ENCODE measurements at regions of chr11 and their contacts with region 1.

Region 1: DNA sequence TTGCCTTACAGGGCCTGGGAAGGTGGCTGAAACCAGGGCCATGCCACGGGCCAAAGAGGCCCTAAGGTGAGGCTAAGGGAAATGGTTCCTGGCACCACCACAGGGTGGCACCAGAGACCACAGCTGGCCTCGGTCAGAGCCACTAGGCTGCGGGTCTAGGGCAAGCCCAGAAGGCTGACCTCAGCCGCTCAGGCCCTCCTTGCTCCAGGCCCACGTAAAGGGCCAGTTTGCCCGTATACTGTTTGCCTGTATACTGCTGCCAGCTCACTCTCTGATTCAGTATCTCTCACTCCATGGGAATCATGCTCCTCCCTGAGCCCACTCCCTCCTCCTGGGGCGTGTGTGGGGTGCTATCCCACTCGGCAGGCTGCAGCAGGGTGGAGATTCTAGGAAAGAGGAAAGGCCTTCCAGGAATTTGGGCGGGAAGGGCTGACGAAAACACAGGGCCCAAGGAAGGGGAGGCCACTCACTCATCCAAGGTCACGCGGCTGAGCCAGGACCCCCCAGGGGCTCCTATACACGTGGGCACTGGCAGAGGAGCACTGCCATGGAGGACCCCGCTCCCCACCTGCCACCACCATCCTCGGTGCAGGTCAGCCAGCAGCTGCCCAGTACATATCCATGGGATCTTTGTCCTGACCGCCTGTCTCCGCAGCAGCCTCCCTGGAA is 62.4 kb downstream of the NECTIN1 start:
- DNase-seq: peak; percentile 72 to 91 (median 83)
- H3K4me3 ChIP-seq: no peak overlapping the region
- H3K27ac ChIP-seq: peak overlapping the region in 1 of 5 donors; percentile 16
- H3K4me1 ChIP-seq: peaks cover 0 to 9% of the 10 kb centered on the region in 2 donors
- H3K27me3 ChIP-seq: no peaks in the 10 kb centered on the region
- CTCF ChIP-seq: peak; percentile 92 to 99 (median 97)
- POLR2A ChIP-seq: no peak

Region 2: GRCh38 chr11:119481021-119481666 is 185.5 kb before region 1 on chr11:
- intact Hi-C with region 1: loop called (anchors 10 kb)
- DNase-seq: peak; percentile 78 to 92 (median 89)
- H3K4me3 ChIP-seq: no peak overlapping the region
- H3K27ac ChIP-seq: no peak overlapping the region
- H3K4me1 ChIP-seq: peaks cover 0 to 8% of the 10 kb centered on the region in 2 donors
- H3K27me3 ChIP-seq: no peaks in the 10 kb centered on the region
- CTCF ChIP-seq: peak; percentile 94 to 98 (median 98)
- POLR2A ChIP-seq: no peak

Region 3: GRCh38 chr11:119728651-119729580 is 62.3 kb after region 1 on chr11 and contains the start of gene NECTIN1:
- intact Hi-C with region 1: loop called in 1 of 2 experiments (anchors 5 kb)
- DNase-seq: peak; percentile 84 to 91 (median 88)
- H3K4me3 ChIP-seq: peak within 1 kb of the TSS in 3 of 4 donors; percentile 18 to 85 (median 62)
- H3K27ac ChIP-seq: peak within 1 kb of the TSS in 4 of 5 donors; percentile 54 to 98 (median 76)
- H3K4me1 ChIP-seq: peaks cover 16 to 24% of the 10 kb centered on the region in 2 donors
- H3K27me3 ChIP-seq: no peaks in the 10 kb centered on the region
- CTCF ChIP-seq: peak; percentile 69 to 97 (median 85)
- POLR2A ChIP-seq: peak; percentile 75 to 93
- total RNA-seq, gene NECTIN1: 1.6 to 19.6 (median 5.3) TPM

Region 4: GRCh38 chr11:119739021-119739703 is 72.6 kb after region 1 on chr11:
- intact Hi-C with region 1: loop called (anchors 5 kb)
- DNase-seq: no peak
- H3K4me3 ChIP-seq: no peak overlapping the region
- H3K27ac ChIP-seq: no peak overlapping the region
- H3K4me1 ChIP-seq: no peaks in the 10 kb centered on the region
- H3K27me3 ChIP-seq: peaks cover 25% of the 10 kb centered on the region
- CTCF ChIP-seq: no peak
- POLR2A ChIP-seq: no peak

Region 5: GRCh38 chr11:119752345-119752871 is 85.8 kb after region 1 on chr11:
- intact Hi-C with region 1: no loop called
- DNase-seq: no peak
- H3K4me3 ChIP-seq: no peak overlapping the region
- H3K27ac ChIP-seq: peak overlapping the region in 1 of 5 donors; percentile 27
- H3K4me1 ChIP-seq: no peaks in the 10 kb centered on the region
- H3K27me3 ChIP-seq: no peaks in the 10 kb centered on the region
- CTCF ChIP-seq: no peak
- POLR2A ChIP-seq: no peak

Region 6: GRCh38 chr11:120013325-120014270 is 347.0 kb after region 1 on chr11:
- intact Hi-C with region 1: loop called in 1 of 2 experiments (anchors 10 kb)
- DNase-seq: peak in 6 of 7 donors; percentile 22 to 65 (median 35)
- H3K4me3 ChIP-seq: no peak overlapping the region
- H3K27ac ChIP-seq: no peak overlapping the region
- H3K4me1 ChIP-seq: no peaks in the 10 kb centered on the region
- H3K27me3 ChIP-seq: peaks cover 14% of the 10 kb centered on the region
- CTCF ChIP-seq: peak; percentile 29 to 65 (median 50)
- POLR2A ChIP-seq: no peak

Region 7: GRCh38 chr11:120108154-120108865 is 441.7 kb after region 1 on chr11:
- intact Hi-C with region 1: loop called (anchors 2 to 10 kb)
- DNase-seq: peak; percentile 46 to 85 (median 77)
- H3K4me3 ChIP-seq: no peak overlapping the region
- H3K27ac ChIP-seq: no peak overlapping the region
- H3K4me1 ChIP-seq: no peaks in the 10 kb centered on the region
- H3K27me3 ChIP-seq: peaks cover 7% of the 10 kb centered on the region
- CTCF ChIP-seq: peak; percentile 96 to 99 (median 98)
- POLR2A ChIP-seq: no peak

Region 8: GRCh38 chr11:120172054-120172911 is 505.7 kb after region 1 on chr11:
- intact Hi-C with region 1: loop called in 1 of 2 experiments (anchors 10 kb)
- DNase-seq: peak; percentile 70 to 90 (median 85)
- H3K4me3 ChIP-seq: no peak overlapping the region
- H3K27ac ChIP-seq: no peak overlapping the region
- H3K4me1 ChIP-seq: peaks cover 5 to 16% of the 10 kb centered on the region in 2 donors
- H3K27me3 ChIP-seq: no peaks in the 10 kb centered on the region
- CTCF ChIP-seq: peak; percentile 69 to 97 (median 92)
- POLR2A ChIP-seq: no peak

Measured in adrenal gland (tissue), 19 donors.